ENCODE measurements at regions of chr12 and their contacts with region 1.

Region 1: GRCh38 chr12:51424662-51425438 is at the start of gene SLC4A8:
- DNase-seq: peak; percentile 72 to 87 (median 82)
- ATAC-seq: peak; percentile 91
- H3K4me3 ChIP-seq: no peak within 1 kb of the TSS
- H3K4me1 ChIP-seq: peaks cover 2% of the 10 kb centered on the region
- CTCF ChIP-seq: peak; percentile 61
- total RNA-seq, gene SLC4A8: 0.84 to 1.8 (median 1.5) TPM

Region 2: GRCh38 chr12:50992819-50993218 is 432.0 kb before region 1 on chr12:
- intact Hi-C with region 1: no loop called
- DNase-seq: no peak
- ATAC-seq: no peak
- H3K4me3 ChIP-seq: no peak overlapping the region
- H3K4me1 ChIP-seq: no peaks in the 10 kb centered on the region
- CTCF ChIP-seq: no peak

Region 3: GRCh38 chr12:51262758-51263177 is 162.1 kb before region 1 on chr12:
- intact Hi-C with region 1: no loop called
- DNase-seq: peak; percentile 68 to 87 (median 78)
- ATAC-seq: peak; percentile 95
- H3K4me3 ChIP-seq: no peak overlapping the region
- H3K4me1 ChIP-seq: peaks cover 6% of the 10 kb centered on the region
- CTCF ChIP-seq: no peak

Region 4: GRCh38 chr12:51531978-51532497 is 107.2 kb after region 1 on chr12:
- intact Hi-C with region 1: loop called (anchors 5 to 10 kb)
- DNase-seq: peak in 2 of 3 donors; percentile 79 to 84
- ATAC-seq: peak; percentile 94
- H3K4me3 ChIP-seq: no peak overlapping the region
- H3K4me1 ChIP-seq: no peaks in the 10 kb centered on the region
- CTCF ChIP-seq: peak; percentile 72

Region 5: GRCh38 chr12:51823875-51824565 is 399.2 kb after region 1 on chr12:
- intact Hi-C with region 1: loop called in 1 of 2 experiments (anchors 5 kb)
- DNase-seq: peak in 1 of 3 donors; percentile 59
- ATAC-seq: peak; percentile 56
- H3K4me3 ChIP-seq: no peak overlapping the region
- H3K4me1 ChIP-seq: peaks cover 13% of the 10 kb centered on the region
- CTCF ChIP-seq: peak; percentile 29